GM13976 (cell line): ENCODE measurements at regions of chr9 and their contacts with region 1.

Region 1: DNA sequence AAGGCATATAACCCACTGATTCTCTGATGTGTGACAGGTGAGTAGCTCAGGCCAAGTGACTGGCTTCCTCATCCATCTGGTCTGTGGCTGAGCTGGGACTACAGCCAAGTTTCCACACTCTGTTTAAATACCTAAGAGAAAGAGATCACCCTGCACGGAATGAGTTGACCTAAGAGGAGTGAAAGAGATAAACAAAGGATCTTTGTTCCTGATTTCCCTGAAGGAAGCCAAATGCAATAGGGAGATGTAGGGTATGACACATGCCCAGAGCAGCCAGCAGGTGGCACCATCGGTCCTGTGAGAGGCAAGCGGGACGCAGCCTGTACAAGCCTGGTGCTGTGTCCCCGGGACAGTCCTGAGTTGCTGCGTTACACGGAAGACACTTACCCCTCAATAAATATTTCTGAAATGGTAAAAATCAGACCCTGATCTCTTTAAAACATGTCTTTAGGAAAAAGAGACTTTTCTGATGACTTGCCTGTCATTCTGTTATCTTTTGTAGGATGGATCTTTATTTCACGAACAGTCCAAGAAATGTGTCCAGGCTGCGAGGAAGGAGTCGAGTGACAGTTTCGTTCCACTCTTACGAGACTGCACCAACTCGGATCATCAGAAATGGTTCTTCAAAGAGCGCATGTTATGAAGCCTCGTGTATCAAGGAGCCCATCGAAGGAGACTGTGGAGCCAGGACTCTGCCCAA is 41.1 kb downstream of the GALNT12 start:
- DNase-seq: peak; percentile 83
- CTCF ChIP-seq: peak; percentile 95

Region 2: DNA sequence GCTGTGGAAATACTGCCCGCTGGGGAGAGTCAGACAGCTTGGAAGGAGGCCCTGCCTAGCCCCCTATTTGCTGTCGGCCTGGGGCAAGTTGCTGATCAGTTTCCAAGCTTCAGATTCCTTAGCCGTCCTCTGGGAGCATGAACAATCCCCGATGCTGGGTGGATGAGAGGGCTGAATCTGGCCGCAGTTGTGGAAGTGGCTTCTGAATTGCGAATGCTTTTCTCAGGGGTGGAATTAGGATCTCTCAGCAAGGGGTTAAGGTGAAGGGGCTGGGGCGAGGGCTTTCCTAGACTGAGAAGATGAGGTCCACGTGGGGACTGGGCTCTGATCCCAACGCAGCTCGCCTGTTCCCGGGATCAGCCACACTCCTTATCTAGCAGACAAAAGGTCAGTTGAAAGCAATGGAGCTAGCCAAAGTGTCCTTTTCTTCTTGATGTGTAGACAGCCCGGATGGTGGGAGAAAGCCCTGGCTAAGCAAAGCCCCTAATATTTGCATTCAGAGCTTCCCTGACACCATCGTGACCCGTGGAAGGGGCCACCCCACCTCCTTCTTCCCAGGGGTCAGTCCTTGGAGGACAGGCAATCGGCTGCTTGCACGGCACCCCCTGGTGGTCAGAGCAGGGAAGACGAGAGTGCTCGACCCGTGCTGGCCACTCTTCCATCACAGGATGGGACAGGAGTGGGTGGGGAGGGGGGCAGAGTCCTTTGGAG is 150.0 kb after region 1 on chr9:
- in situ Hi-C with region 1: loop called (anchors 10 kb)
- DNase-seq: peak; percentile 79
- CTCF ChIP-seq: peak; percentile 87

Region 3: GRCh38 chr9:99146574-99146973 is 298.0 kb after region 1 on chr9:
- in situ Hi-C with region 1: loop called (anchors 5 kb)
- DNase-seq: no peak
- CTCF ChIP-seq: no peak

Region 4: GRCh38 chr9:99474186-99474585 is 625.6 kb after region 1 on chr9:
- in situ Hi-C with region 1: no loop called
- DNase-seq: no peak
- CTCF ChIP-seq: no peak